Activated naive CD4-positive, alpha-beta T cell treated with anti-CD3 and anti-CD28 coated beads for 36 hours (primary cell): ENCODE measurements at regions of chr14 and their contacts with region 1.

Region 1: DNA sequence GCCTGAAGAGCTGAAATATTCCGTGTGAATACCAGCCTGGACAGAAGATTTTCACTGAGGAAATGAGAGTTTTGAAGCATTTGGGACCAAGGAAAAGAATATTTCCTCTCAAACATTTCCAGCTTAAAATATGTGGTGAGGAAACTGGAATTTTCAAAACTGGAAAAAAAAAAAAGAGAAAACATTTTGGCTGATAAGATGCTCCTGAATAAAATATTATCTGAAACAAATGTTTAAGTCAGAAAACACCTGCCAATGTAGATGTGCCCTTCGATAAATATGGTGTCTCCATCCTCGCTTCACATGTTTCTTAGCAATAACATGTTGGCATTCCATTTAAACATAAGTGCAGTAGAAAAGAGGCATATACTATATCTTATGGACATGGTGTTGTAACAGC is 567.0 kb downstream of the PRKD1 start:
- DNase-seq: no peak
- H3K4me3 Mint-ChIP-seq: no peak overlapping the region
- H3K27ac Mint-ChIP-seq: no peak overlapping the region
- H3K4me1 Mint-ChIP-seq: no peaks in the 10 kb centered on the region
- H3K27me3 Mint-ChIP-seq: no peaks in the 10 kb centered on the region

Region 2: DNA sequence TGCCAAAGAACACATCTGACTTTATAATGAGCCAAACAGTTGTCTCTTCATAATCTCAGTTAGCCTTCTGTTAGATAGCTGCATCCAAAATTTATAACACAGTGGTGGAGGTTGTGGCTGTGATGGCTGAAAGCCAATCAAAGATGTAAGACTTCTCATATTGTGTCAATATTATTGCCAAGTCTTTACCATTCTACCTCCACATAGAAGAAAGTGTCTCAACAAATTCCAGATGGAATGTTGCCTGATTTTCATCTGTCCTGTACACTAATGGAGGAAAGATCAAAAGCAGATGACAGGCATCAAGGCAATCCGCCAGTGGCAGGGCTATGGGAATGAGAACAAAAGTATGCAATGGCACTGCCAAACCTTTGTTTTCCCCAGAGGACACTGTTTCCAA is 1949.7 kb before region 1 on chr14:
- CTCF ChIA-PET with region 1: no interaction called
- intact Hi-C with region 1: loop called (anchors 10 kb)
- DNase-seq: no peak
- H3K4me3 Mint-ChIP-seq: no peak overlapping the region
- H3K27ac Mint-ChIP-seq: no peak overlapping the region
- H3K4me1 Mint-ChIP-seq: no peaks in the 10 kb centered on the region
- H3K27me3 Mint-ChIP-seq: no peaks in the 10 kb centered on the region